ENCODE measurements at regions of chr16 and their contacts with region 1.

Region 1: GRCh38 chr16:30166202-30166902 is 17.1 kb upstream of the CORO1A start:
- DNase-seq: peak in 1 of 4 donors; percentile 34
- ATAC-seq: no peak
- H3K4me3 ChIP-seq: no peak overlapping the region
- H3K27ac ChIP-seq: no peak overlapping the region
- H3K4me1 ChIP-seq: no peaks in the 10 kb centered on the region
- H3K27me3 ChIP-seq: no peaks in the 10 kb centered on the region
- CTCF ChIP-seq: no peak
- POLR2A ChIP-seq: no peak

Region 2: GRCh38 chr16:30112197-30113030 is 53.9 kb before region 1 on chr16:
- intact Hi-C with region 1: loop called (anchors 10 kb)
- DNase-seq: peak in 3 of 4 donors; percentile 37 to 51 (median 39)
- ATAC-seq: peak; percentile 50
- H3K4me3 ChIP-seq: no peak overlapping the region
- H3K27ac ChIP-seq: no peak overlapping the region
- H3K4me1 ChIP-seq: no peaks in the 10 kb centered on the region
- H3K27me3 ChIP-seq: no peaks in the 10 kb centered on the region
- CTCF ChIP-seq: peak in 6 of 7 experiments; percentile 23 to 50 (median 32)
- POLR2A ChIP-seq: no peak